WTC11 (cell line): ENCODE measurements at regions of chr19 and their contacts with region 1.

Region 1: DNA sequence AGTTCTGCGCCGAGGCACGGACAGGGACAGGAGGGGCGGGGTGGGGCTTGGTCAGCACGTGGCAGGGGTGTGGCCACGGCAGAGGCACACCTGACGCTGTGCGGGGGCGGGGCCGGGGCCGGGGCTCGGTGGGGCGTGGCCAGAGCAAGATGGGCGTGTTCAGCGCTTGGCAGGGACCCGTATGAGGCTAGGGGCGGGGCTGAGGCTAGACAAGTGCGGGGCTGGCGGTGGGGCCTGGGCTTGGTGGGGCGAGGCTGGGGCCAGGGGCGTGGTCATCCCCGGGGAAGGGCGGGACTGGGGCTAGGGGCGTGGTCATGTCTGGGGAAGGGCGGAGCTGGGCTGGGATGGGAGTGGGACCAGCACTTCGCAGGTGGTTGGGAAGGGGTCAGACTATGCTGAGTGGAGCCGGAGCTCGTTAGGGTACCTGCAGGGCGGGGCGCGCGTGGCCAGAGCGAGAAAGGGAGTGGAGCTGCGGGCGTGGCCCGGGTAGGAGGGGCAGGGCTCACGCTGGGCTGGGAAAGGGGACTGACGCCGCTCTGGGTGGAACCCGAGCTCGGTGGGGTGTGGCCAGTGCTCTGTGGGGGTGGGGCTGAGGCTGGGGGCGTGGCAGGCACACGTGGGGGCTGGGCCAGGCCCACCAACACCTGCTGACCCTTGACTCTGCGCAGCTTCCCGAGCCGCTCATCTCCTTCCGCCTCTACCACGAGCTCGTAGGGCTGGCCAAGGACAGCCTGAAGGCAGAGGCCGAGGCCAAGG is 12.8 kb downstream of the POLR2E start:
- DNase-seq: peak; percentile 99
- ATAC-seq: peak; percentile 83
- H3K4me3 Mint-ChIP-seq: peak overlapping the region; percentile 67
- H3K27ac Mint-ChIP-seq: peak overlapping the region; percentile 90
- H3K4me1 Mint-ChIP-seq: no peaks in the 10 kb centered on the region; the same call in 1 of the 2 replicates
- H3K27me3 Mint-ChIP-seq: no peaks in the 10 kb centered on the region
- CTCF ChIP-seq: no peak

Region 2: DNA sequence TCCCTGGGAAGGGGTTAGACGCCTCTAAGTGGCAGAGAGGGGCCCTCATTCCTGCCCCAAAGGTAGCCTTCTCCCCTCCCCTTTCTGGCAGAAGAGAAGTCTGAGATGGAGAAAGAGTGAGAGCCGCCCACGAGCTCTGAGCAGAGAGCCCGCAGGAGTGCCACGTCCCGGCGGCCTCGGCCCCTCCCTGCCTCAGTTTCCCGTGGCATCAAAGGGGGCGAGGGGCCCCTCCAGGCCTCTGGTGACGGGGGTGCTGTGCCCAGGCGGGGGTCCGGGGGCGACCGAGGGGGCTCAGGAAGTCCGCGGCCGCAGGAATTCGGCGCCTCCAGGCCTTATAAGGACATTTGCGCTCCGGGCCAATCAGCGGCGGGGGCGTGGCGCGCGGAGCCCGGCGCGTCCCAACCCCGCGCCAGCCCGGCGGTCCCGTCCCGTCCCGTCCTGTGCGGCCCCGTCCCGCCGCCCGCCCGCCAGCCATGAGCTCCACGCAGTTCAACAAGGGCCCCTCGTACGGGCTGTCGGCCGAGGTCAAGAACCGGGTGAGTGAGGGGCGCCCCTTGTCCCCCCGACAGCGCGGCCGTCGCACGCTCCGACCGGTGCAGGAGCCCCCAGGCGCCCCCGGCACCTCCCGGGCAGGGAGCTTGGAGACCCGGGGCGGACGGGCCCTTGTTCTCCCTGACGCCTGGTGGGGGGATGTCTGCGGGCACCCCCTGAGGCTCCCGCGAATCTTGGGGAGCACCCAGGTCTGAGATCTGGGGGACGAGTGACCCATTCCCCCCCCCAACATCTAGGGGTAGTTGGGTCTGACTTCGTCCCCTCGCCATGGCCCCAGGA is 55.9 kb before region 1 on chr19 and contains the start of gene CNN2:
- CTCF ChIA-PET with region 1: interaction called, 11 read pairs
- POLR2A ChIA-PET with region 1: interaction called, 15 read pairs
- DNase-seq: peak; percentile 84
- ATAC-seq: peak; percentile 69
- H3K4me3 Mint-ChIP-seq: peak within 1 kb of the TSS; percentile 92
- H3K27ac Mint-ChIP-seq: peak within 1 kb of the TSS; percentile 94
- H3K4me1 Mint-ChIP-seq: peaks cover 3% of the 10 kb centered on the region
- H3K27me3 Mint-ChIP-seq: no peaks in the 10 kb centered on the region
- CTCF ChIP-seq: no peak
- total RNA-seq, gene CNN2: 387 to 391 TPM (median 390 TPM) in 3 replicates

Region 3: DNA sequence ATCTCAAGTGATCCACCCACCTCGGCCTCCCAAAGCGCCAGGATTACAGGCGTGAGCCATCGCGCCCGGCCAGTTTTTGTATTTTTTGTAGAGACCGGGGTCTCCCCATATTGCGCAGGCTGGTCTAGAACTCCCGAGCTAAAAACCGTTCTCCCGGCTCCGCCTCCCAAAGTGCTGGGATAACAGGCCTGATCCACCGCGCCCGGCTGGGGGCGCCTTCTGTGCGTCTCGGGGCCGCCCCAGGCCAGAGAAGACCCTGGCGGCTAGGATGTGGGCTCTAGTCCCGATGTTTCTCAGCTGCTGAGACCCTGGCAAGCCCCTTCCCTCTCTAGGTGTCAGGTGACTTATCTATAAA is 11.8 kb before region 1 on chr19:
- CTCF ChIA-PET with region 1: interaction called, 109 read pairs
- POLR2A ChIA-PET with region 1: interaction called, 22 read pairs
- DNase-seq: peak; percentile 77
- ATAC-seq: peak; percentile 49
- H3K4me3 Mint-ChIP-seq: peak overlapping the region; percentile 52
- H3K27ac Mint-ChIP-seq: no peak overlapping the region
- H3K4me1 Mint-ChIP-seq: peaks cover 11% of the 10 kb centered on the region
- H3K27me3 Mint-ChIP-seq: peaks cover 29% of the 10 kb centered on the region
- CTCF ChIP-seq: no peak

Region 4: GRCh38 chr19:1223018-1223855 is 140.9 kb after region 1 on chr19:
- CTCF ChIA-PET with region 1: interaction called, 10 read pairs
- POLR2A ChIA-PET with region 1: no interaction called
- DNase-seq: peak; percentile 78
- ATAC-seq: peak; percentile 51
- H3K4me3 Mint-ChIP-seq: no peak overlapping the region
- H3K27ac Mint-ChIP-seq: peak overlapping the region; percentile 32; the same call in 1 of the 2 replicates
- H3K4me1 Mint-ChIP-seq: peaks cover under 1% of the 10 kb centered on the region
- H3K27me3 Mint-ChIP-seq: no peaks in the 10 kb centered on the region
- CTCF ChIP-seq: no peak; the same call in 1 of the 2 replicates

Region 5: GRCh38 chr19:1269065-1269477 is 186.7 kb after region 1 on chr19 and contains the start of gene CIRBP:
- CTCF ChIA-PET with region 1: interaction called, 22 read pairs
- POLR2A ChIA-PET with region 1: interaction called, 8 read pairs
- DNase-seq: peak; percentile 100
- ATAC-seq: peak; percentile 74
- H3K4me3 Mint-ChIP-seq: peak within 1 kb of the TSS; percentile 79
- H3K27ac Mint-ChIP-seq: peak within 1 kb of the TSS; percentile 97
- H3K4me1 Mint-ChIP-seq: peaks cover 60% of the 10 kb centered on the region
- H3K27me3 Mint-ChIP-seq: peaks cover 7% of the 10 kb centered on the region
- CTCF ChIP-seq: no peak
- total RNA-seq, gene CIRBP: 256 to 298 TPM (median 256 TPM) in 3 replicates